Gastrocnemius medialis (tissue), 4 donors: ENCODE measurements at regions of chr1 and their contacts with region 1.

Region 1: GRCh38 chr1:66452162-66452561 is 81.8 kb upstream of the SGIP1 start:
- DNase-seq: no peak
- ATAC-seq: no peak
- H3K4me3 ChIP-seq: no peak overlapping the region
- H3K27ac ChIP-seq: no peak overlapping the region
- H3K4me1 ChIP-seq: peaks cover 14% of the 10 kb centered on the region in 2 donors
- H3K27me3 ChIP-seq: no peaks in the 10 kb centered on the region
- CTCF ChIP-seq: no peak
- POLR2A ChIP-seq: no peak

Region 2: GRCh38 chr1:65948609-65949229 is 503.4 kb before region 1 on chr1:
- in situ Hi-C with region 1: loop called in 3 of 4 experiments (anchors 10 to 25 kb)
- intact Hi-C with region 1: no loop called
- DNase-seq: no peak
- ATAC-seq: peak; percentile 46 to 54
- H3K4me3 ChIP-seq: no peak overlapping the region
- H3K27ac ChIP-seq: peak overlapping the region in 2 of 4 donors; percentile 26 to 33
- H3K4me1 ChIP-seq: no peaks in the 10 kb centered on the region
- H3K27me3 ChIP-seq: no peaks in the 10 kb centered on the region
- CTCF ChIP-seq: no peak
- POLR2A ChIP-seq: no peak